Panc1 (cell line): ENCODE measurements at regions of chr9 and their contacts with region 1.

Region 1: GRCh38 chr9:97332993-97333392 is 25.5 kb downstream of the CCDC180 start:
- DNase-seq: no peak
- ATAC-seq: no peak
- H3K4me3 ChIP-seq: no peak overlapping the region
- H3K27ac ChIP-seq: no peak overlapping the region
- H3K4me1 ChIP-seq: no peaks in the 10 kb centered on the region
- H3K27me3 ChIP-seq: no peaks in the 10 kb centered on the region
- CTCF ChIP-seq: no peak

Region 2: DNA sequence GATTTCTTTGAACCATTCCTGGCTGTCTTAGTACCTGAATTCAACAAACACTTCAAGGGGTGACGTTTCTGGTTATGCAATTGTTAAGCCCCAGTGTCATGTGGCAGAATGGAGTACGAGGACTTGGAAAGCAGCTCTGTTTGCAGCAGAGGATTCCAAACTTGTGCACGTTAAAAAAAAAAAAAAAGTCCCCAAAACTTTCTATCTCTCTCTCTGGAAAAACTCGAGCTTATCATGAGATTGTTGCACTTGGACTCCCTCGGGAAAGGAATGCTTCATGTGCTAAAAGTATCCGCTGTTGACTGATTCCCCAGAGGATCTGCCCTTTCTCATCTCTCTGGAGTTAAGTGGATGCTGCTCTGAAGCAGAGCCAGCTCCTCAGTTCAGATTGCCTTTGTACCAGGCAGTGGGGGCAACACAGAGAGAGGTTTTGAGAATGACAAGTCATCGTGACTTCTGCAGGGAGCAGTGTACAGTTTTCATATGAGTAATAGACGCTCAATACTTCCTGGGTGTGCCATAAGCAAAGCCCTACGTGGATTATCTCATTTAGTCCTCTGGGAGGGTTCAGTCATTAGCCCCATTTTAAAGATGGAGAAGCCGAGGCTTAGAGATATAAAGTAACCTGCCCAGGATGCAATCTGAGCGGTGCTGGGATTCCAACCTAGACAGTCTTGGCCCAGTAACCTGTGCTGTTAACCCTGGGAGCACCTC is 196.5 kb after region 1 on chr9:
- CTCF ChIA-PET with region 1: no interaction called
- POLR2A ChIA-PET with region 1: interaction called, 12 read pairs
- in situ Hi-C with region 1: no loop called
- intact Hi-C with region 1: no loop called
- DNase-seq: no peak
- ATAC-seq: no peak
- H3K4me3 ChIP-seq: no peak overlapping the region
- H3K27ac ChIP-seq: no peak overlapping the region
- H3K4me1 ChIP-seq: no peaks in the 10 kb centered on the region
- H3K27me3 ChIP-seq: no peaks in the 10 kb centered on the region
- CTCF ChIP-seq: no peak